AG04450 (cell line): ENCODE measurements at regions of chr1 and their contacts with region 1.

Region 1: GRCh38 chr1:212291505-212292134 is 6.4 kb downstream of the PPP2R5A start:
- DNase-seq: no peak
- H3K4me3 ChIP-seq: no peak overlapping the region
- H3K27ac ChIP-seq: no peak overlapping the region
- H3K27me3 ChIP-seq: no peaks in the 10 kb centered on the region
- CTCF ChIP-seq: peak; percentile 75

Region 2: DNA sequence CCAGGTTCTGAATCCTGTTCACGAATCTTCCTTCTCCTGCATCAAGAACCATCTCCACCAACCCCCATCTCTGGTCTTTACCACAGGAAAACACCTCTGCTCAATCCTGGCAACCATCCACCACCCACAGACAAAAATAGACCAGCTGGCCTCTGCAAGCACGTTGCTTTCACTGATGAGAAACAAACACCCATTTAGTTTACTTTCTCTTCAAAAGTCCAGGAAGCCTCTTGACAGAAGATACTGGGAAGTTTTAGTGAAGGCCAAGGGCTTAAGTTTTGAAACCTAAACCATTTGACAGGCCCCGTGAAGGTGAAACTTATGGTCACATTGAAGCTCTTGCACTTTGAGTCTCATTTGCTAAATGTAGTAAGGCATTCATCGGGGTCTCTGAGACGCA is 129.0 kb before region 1 on chr1:
- CTCF ChIA-PET with region 1: no interaction called
- POLR2A ChIA-PET with region 1: no interaction called
- DNase-seq: peak; percentile 57
- H3K4me3 ChIP-seq: no peak overlapping the region
- H3K27ac ChIP-seq: no peak overlapping the region
- H3K27me3 ChIP-seq: no peaks in the 10 kb centered on the region
- CTCF ChIP-seq: no peak

Region 3: DNA sequence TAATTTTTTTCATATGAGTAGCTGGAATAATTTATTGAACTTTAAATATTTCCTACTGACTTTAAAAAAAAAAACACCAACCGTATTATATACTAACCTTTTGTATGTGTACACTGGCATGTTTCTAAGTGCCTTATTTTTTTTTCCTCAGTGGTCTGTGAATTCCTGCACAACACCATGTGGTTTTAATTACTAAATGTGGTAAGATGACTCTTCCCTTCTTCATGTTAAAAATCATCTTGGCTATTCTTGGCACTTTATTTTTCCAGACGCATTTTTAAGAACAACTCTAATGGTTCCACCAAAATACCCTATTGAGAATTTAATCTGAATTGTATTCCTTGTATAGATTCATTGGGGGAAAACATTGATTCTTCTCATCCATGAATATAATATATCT is 22.0 kb after region 1 on chr1:
- CTCF ChIA-PET with region 1: interaction called, 17 read pairs
- POLR2A ChIA-PET with region 1: no interaction called
- DNase-seq: no peak
- H3K4me3 ChIP-seq: no peak overlapping the region
- H3K27ac ChIP-seq: no peak overlapping the region
- H3K27me3 ChIP-seq: no peaks in the 10 kb centered on the region
- CTCF ChIP-seq: no peak